Adrenal gland (tissue), 19 donors: ENCODE measurements at regions of chr20 and their contacts with region 1.

Region 1: DNA sequence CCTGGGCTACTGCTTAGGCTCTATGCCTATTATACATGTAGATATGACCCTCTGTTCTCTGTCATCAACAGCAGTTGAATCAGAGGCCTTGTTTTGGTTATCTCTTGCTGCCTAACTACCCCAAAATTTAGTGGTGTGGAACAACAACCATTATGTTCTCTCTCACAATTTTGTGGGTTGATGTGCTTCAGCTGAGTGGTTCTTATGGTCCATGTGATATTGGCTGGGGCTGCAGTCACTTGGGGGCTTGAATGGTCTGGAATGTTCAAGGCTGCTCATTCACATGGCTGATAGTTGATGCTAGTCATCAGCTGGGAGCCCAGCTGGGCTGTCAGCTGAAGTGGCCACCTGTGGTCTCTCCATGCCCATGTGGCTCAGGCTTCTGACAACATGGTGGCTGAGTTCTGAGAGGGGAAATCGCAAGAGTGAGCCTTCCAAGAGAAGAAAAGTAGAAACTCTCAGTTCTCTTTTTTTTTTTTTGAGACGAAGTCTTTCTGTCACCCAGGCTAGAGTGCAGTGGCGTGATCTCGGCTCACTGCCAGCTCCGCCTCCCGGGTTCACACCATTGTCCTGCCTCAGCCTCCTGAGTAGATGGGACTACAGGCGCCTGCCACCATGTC is 47.8 kb downstream of the SHLD1 start:
- DNase-seq: peak in 2 of 7 donors; percentile 15 to 53
- H3K4me3 ChIP-seq: no peak overlapping the region
- H3K27ac ChIP-seq: no peak overlapping the region
- H3K4me1 ChIP-seq: no peaks in the 10 kb centered on the region
- H3K27me3 ChIP-seq: no peaks in the 10 kb centered on the region
- CTCF ChIP-seq: no peak
- POLR2A ChIP-seq: no peak

Region 2: DNA sequence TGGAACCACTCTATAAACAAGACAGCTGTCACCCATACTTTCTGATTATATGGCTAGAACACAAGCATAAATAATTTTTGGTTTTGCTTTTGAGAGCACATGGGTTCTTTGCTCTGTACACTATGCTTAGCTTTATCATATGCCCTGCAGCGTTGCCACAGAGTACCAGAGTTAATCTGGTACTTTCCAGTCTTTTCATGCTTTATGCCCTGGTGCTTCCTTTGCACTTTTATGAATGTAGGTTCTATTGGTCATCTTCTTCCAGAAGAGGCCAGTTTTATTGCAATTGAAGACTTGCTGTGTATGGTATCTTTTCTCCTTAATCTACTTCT is 27.0 kb before region 1 on chr20:
- intact Hi-C with region 1: no loop called
- DNase-seq: no peak
- H3K4me3 ChIP-seq: no peak overlapping the region
- H3K27ac ChIP-seq: no peak overlapping the region
- H3K4me1 ChIP-seq: peaks cover 0 to 5% of the 10 kb centered on the region in 2 donors
- H3K27me3 ChIP-seq: no peaks in the 10 kb centered on the region
- CTCF ChIP-seq: no peak
- POLR2A ChIP-seq: no peak

Region 3: DNA sequence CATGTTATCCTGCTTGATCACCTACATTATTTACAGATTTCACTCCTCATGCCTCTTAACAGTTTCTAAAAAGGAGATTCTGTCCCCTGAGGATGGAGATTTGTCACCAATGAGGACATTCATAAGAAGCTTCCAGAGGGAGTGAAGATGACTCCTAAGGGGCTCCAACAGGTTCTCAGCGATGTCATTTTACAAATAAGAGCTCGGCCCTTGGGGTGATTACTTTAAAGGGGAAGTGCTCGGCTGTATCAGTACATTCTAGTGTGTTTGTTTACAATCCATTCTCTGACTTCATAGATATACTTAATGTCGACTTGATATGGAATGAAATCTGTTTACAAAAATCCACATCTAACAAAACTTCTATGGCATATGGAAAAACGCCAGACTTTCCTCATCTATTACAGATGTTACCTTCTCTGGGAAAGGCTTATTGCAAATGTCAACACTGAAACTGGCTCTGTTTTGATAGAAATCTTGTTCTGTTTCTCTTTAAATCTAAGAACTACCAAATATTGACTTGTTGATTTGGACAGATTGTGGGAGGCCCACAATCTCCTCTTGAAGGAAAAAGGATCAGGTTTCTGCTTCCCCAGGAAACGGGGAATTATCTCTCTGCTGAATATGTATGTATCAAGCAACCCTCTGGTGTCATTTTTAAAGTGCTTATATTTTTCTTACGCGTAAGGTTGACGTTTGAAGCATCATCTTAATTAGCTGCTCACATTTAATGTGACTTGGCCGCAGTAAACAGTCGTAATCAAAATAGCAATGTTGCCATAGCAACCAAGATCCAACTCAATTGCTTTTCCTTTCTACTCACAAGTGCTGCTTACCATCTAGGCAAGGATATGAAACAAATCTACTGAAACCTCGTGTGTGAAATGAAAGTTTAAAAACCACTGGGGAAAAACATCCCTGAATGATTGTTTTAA is 48.0 kb after region 1 on chr20:
- intact Hi-C with region 1: no loop called
- DNase-seq: no peak
- H3K4me3 ChIP-seq: no peak overlapping the region
- H3K27ac ChIP-seq: peak overlapping the region in 2 of 5 donors; percentile 7 to 71
- H3K4me1 ChIP-seq: peaks cover 40 to 46% of the 10 kb centered on the region in 2 donors
- H3K27me3 ChIP-seq: no peaks in the 10 kb centered on the region
- CTCF ChIP-seq: no peak
- POLR2A ChIP-seq: no peak

Region 4: GRCh38 chr20:5933802-5934436 is 136.0 kb after region 1 on chr20:
- intact Hi-C with region 1: loop called in 1 of 2 experiments (anchors 10 kb)
- DNase-seq: peak in 1 of 7 donors; percentile 25
- H3K4me3 ChIP-seq: no peak overlapping the region
- H3K27ac ChIP-seq: no peak overlapping the region
- H3K4me1 ChIP-seq: no peaks in the 10 kb centered on the region
- H3K27me3 ChIP-seq: no peaks in the 10 kb centered on the region
- CTCF ChIP-seq: peak in 5 of 6 experiments; percentile 21 to 54 (median 35)
- POLR2A ChIP-seq: no peak